B cell (primary cell): ENCODE measurements at regions of chr16 and their contacts with region 1.

Region 1: DNA sequence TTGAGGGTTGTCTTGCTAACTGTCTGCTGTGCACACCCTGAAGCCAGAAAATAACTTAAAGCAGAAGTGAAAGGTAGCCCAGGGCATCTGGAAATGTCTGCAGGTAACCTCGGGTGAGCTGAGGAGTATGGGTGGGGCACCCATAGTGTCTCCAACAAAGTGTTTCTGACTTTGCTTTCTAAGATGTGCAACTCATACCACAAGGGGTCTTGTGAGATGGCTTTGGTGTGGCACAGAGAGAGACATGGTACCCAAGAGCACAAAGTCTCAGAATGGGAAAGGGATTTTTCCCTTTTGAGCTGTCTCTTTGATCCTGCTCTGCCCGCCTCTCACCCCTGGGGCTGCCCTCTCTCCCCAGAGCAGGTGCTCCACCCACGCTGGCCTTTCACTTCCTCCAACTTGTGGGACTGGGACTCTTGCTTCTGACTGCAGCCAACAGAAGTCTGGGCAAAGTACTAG is 6.9 kb downstream of the CHD9 start:
- DNase-seq: peak; percentile 89
- ATAC-seq: peak; percentile 83
- H3K4me3 ChIP-seq: peak overlapping the region in 4 of 5 experiments; percentile 23 to 62 (median 38)
- H3K4me3 Mint-ChIP-seq: peak overlapping the region; percentile 85
- H3K27ac ChIP-seq: peak overlapping the region; percentile 72 to 93
- H3K27ac Mint-ChIP-seq: peak overlapping the region; percentile 95
- H3K4me1 ChIP-seq: peaks cover 78 to 100% of the 10 kb centered on the region in 2 donors
- H3K4me1 Mint-ChIP-seq: peaks cover 76% of the 10 kb centered on the region
- H3K27me3 ChIP-seq: no peaks in the 10 kb centered on the region
- H3K27me3 Mint-ChIP-seq: no peaks in the 10 kb centered on the region
- CTCF ChIP-seq: peak; percentile 19

Region 2: DNA sequence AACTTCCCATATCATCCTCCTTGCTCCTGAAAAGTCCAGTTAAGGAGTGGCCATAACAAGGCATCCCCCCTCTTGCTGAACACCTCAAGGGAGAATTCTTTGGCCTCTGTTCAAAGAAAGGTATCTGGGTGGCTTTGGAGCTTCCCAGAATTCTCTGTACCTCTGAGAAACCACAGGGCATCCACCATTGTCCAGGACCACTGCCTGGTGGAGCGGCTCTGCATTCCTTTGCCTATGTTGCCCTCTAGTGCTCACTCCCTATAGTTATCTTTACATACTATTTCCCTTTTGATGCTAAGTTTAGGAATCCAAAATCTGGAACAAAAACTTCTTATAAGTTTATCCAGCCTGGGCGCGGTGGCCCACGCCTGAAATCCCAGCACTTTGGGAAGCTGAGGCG is 39.4 kb before region 1 on chr16:
- CTCF ChIA-PET with region 1: no interaction called
- POLR2A ChIA-PET with region 1: no interaction called
- intact Hi-C with region 1: no loop called
- DNase-seq: no peak
- ATAC-seq: no peak
- H3K4me3 ChIP-seq: no peak overlapping the region
- H3K4me3 Mint-ChIP-seq: no peak overlapping the region
- H3K27ac ChIP-seq: no peak overlapping the region
- H3K27ac Mint-ChIP-seq: no peak overlapping the region
- H3K4me1 ChIP-seq: no peaks in the 10 kb centered on the region
- H3K4me1 Mint-ChIP-seq: no peaks in the 10 kb centered on the region
- H3K27me3 ChIP-seq: no peaks in the 10 kb centered on the region
- H3K27me3 Mint-ChIP-seq: peaks cover 11% of the 10 kb centered on the region
- CTCF ChIP-seq: no peak

Region 3: DNA sequence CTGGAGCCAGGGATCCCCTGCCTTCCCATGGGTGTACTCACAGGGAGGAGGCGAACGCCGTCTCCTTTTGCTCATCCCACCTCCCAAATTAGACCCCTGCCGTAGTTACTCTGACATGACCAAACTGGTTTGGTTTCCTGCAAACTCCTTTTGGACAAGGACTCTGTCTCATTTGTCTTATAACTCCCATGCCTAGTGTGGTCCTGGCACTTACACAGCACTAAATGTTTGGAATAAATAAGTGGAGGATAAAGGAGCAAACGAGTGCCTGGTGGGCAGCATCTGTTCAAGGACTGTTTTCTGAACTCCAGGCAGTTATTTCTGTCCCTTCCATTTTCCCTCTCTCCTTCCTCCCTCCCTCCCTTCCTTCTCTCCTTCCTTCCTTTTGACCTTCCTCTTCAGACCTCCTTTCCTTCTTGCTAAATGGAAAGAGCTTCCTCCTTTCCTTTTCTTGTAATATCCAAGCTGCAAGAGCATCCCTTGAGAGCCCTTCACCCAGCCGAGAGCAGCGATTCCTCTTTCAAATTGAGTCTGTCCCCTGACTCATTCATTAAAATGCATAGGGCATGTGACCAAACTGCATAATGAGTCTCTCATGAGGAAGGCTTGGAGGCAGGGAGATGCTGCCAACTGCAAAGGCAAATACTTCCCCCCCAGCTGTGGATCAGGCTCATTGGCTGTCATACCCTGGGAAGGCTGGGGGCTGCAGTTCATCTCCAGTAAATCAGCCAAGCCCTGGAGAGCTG is 29.9 kb after region 1 on chr16:
- CTCF ChIA-PET with region 1: interaction called, 10 read pairs
- POLR2A ChIA-PET with region 1: interaction called, 3 read pairs
- intact Hi-C with region 1: no loop called
- DNase-seq: peak; percentile 56
- ATAC-seq: peak; percentile 64
- H3K4me3 ChIP-seq: peak overlapping the region in 1 of 5 experiments; percentile 27
- H3K4me3 Mint-ChIP-seq: peak overlapping the region; percentile 79
- H3K27ac ChIP-seq: peak overlapping the region; percentile 42 to 61
- H3K27ac Mint-ChIP-seq: peak overlapping the region; percentile 89
- H3K4me1 ChIP-seq: peaks cover 52 to 60% of the 10 kb centered on the region in 2 donors
- H3K4me1 Mint-ChIP-seq: peaks cover 71% of the 10 kb centered on the region
- H3K27me3 ChIP-seq: no peaks in the 10 kb centered on the region
- H3K27me3 Mint-ChIP-seq: no peaks in the 10 kb centered on the region
- CTCF ChIP-seq: no peak

Region 4: DNA sequence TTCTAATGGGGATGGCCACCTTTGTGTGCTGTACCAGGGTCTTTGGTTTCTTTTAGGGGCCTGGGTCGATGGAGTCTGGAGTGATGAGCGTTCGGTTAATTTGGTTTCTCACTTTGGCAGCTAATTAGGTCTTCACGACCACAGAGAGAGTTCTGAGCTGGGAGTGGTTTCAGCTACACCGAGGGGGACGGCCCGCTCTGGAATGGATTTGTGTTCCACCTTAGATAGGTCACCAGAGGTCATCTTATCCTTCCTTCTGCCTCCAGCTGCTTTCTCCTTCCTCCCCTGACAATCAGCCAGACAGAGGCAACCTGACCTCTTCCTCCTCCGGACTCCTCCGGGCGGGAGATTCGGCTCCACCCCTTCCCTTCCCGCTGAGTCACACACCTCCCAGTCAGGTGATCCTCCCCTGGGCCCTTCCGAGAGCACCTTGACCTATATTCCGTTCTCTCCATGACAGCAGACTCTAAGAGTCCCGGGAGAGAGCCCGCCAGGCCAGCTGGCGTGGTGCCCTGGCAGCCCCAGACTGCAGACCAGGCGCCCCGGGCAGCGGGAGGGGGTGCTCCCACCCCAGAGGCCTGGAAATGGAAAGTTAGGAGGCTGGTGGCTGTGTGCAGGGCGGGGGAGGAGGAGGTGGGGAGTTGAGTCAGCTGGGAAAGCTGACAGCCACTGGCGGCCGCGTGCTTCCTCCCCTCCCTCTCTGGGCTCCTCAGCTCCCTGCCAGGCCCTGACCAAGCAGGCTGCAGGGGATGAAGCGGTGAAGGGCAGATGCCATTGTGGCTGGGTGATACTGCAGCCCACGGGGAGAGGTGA is 37.8 kb after region 1 on chr16:
- CTCF ChIA-PET with region 1: interaction called, 9 read pairs
- POLR2A ChIA-PET with region 1: interaction called, 9 read pairs
- intact Hi-C with region 1: loop called (anchors 1 kb)
- DNase-seq: no peak
- ATAC-seq: peak; percentile 35
- H3K4me3 ChIP-seq: peak overlapping the region; percentile 39 to 71 (median 65)
- H3K4me3 Mint-ChIP-seq: peak overlapping the region; percentile 82
- H3K27ac ChIP-seq: peak overlapping the region; percentile 95 to 97
- H3K27ac Mint-ChIP-seq: peak overlapping the region; percentile 91
- H3K4me1 ChIP-seq: peaks cover 40 to 60% of the 10 kb centered on the region in 2 donors
- H3K4me1 Mint-ChIP-seq: peaks cover 68% of the 10 kb centered on the region
- H3K27me3 ChIP-seq: no peaks in the 10 kb centered on the region
- H3K27me3 Mint-ChIP-seq: no peaks in the 10 kb centered on the region
- CTCF ChIP-seq: no peak

Region 5: DNA sequence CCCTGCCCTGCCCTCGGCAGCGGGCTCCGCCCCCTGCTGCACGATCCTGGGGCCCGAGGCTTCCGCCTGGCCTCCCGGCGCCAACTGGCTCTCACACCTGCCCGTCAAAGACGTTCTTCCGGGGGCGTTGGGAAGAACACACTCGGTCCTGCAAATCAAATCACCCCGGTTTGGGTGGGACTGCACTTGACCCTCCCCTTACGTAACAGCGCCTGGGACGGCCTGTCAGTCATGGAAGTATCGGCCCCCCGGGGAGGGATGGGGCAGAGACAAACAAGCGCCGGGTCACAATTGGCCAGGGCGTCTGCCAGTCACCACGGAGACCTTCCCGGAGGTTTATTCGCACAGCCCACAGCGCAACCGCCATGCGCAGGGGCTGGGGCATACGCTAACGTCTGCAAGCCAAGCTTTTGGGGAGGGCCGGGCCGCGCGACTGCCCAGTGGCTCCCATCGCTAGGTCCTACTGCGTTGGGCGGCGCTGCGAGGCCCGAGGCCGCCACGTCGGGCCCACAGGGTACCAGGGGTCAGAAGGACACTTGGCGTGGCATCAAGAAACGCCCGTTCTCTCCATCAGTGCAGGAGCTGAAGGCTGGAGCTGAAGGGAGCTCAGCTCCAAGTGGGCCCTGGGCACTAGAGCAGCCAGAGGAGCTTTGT is 441.7 kb after region 1 on chr16:
- CTCF ChIA-PET with region 1: no interaction called
- POLR2A ChIA-PET with region 1: no interaction called
- intact Hi-C with region 1: loop called (anchors 5 kb)
- DNase-seq: peak; percentile 100
- ATAC-seq: peak; percentile 91
- H3K4me3 ChIP-seq: peak overlapping the region; percentile 52 to 90 (median 86)
- H3K4me3 Mint-ChIP-seq: peak overlapping the region; percentile 87
- H3K27ac ChIP-seq: peak overlapping the region; percentile 82 to 83
- H3K27ac Mint-ChIP-seq: peak overlapping the region; percentile 83
- H3K4me1 ChIP-seq: peaks cover 18 to 21% of the 10 kb centered on the region in 2 donors
- H3K4me1 Mint-ChIP-seq: peaks cover 31% of the 10 kb centered on the region
- H3K27me3 ChIP-seq: no peaks in the 10 kb centered on the region
- H3K27me3 Mint-ChIP-seq: no peaks in the 10 kb centered on the region
- CTCF ChIP-seq: no peak